ENCODE measurements at regions of chr3 and their contacts with region 1.

Region 1: GRCh38 chr3:68571321-68571720 is 361.0 kb downstream of the TAFA4 start:
- DNase-seq: no peak
- ATAC-seq: no peak
- H3K4me3 ChIP-seq: no peak overlapping the region
- H3K4me3 Mint-ChIP-seq: no peak overlapping the region
- H3K27ac ChIP-seq: no peak overlapping the region
- H3K27ac Mint-ChIP-seq: no peak overlapping the region
- H3K4me1 ChIP-seq: no peaks in the 10 kb centered on the region
- H3K4me1 Mint-ChIP-seq: no peaks in the 10 kb centered on the region
- H3K27me3 ChIP-seq: peaks cover 0 to 13% of the 10 kb centered on the region in 2 experiments
- H3K27me3 Mint-ChIP-seq: peaks cover 13% of the 10 kb centered on the region in 2 donors

Region 2: GRCh38 chr3:66856533-66856932 is 1714.8 kb before region 1 on chr3:
- CTCF ChIA-PET with region 1: no interaction called
- POLR2A ChIA-PET with region 1: no interaction called
- DNase-seq: no peak
- ATAC-seq: no peak
- H3K4me3 ChIP-seq: no peak overlapping the region
- H3K4me3 Mint-ChIP-seq: no peak overlapping the region
- H3K27ac ChIP-seq: no peak overlapping the region
- H3K27ac Mint-ChIP-seq: no peak overlapping the region
- H3K4me1 ChIP-seq: no peaks in the 10 kb centered on the region
- H3K4me1 Mint-ChIP-seq: no peaks in the 10 kb centered on the region
- H3K27me3 ChIP-seq: no peaks in the 10 kb centered on the region
- H3K27me3 Mint-ChIP-seq: no peaks in the 10 kb centered on the region

Region 3: GRCh38 chr3:68210671-68211070 is 360.6 kb before region 1 on chr3:
- CTCF ChIA-PET with region 1: no interaction called
- POLR2A ChIA-PET with region 1: no interaction called
- DNase-seq: no peak
- ATAC-seq: no peak
- H3K4me3 ChIP-seq: no peak overlapping the region
- H3K4me3 Mint-ChIP-seq: no peak overlapping the region
- H3K27ac ChIP-seq: no peak overlapping the region
- H3K27ac Mint-ChIP-seq: no peak overlapping the region
- H3K4me1 ChIP-seq: no peaks in the 10 kb centered on the region
- H3K4me1 Mint-ChIP-seq: no peaks in the 10 kb centered on the region
- H3K27me3 ChIP-seq: no peaks in the 10 kb centered on the region
- H3K27me3 Mint-ChIP-seq: no peaks in the 10 kb centered on the region

Region 4: DNA sequence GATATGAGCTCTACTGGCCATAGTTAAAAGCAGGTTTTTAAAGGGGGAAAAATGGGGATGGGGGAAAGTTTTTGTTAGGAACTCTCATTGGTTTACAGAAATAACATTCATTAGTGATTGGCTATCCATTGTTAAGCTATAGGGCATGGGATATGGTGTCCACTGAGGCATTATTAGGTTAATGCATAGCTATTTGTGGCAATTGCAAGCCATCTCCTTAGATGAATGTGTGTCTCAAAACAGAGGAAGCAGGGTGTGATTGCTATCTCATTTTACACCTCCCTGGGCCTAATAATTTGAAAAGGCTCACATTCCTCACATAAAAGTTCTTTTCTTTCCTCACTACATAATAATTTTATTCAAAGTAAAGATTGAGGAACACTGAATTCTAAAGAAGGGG is 35.5 kb before region 1 on chr3:
- CTCF ChIA-PET with region 1: no interaction called
- POLR2A ChIA-PET with region 1: interaction called in 1 of 2 experiments, 12 read pairs
- DNase-seq: no peak
- ATAC-seq: no peak
- H3K4me3 ChIP-seq: no peak overlapping the region
- H3K4me3 Mint-ChIP-seq: no peak overlapping the region
- H3K27ac ChIP-seq: no peak overlapping the region
- H3K27ac Mint-ChIP-seq: no peak overlapping the region
- H3K4me1 ChIP-seq: no peaks in the 10 kb centered on the region
- H3K4me1 Mint-ChIP-seq: no peaks in the 10 kb centered on the region
- H3K27me3 ChIP-seq: no peaks in the 10 kb centered on the region
- H3K27me3 Mint-ChIP-seq: no peaks in the 10 kb centered on the region

Measured in T-cell (primary cell).